Left colon (tissue), 2 donors: ENCODE measurements at regions of chrX and their contacts with region 1.

Region 1: GRCh38 chrX:24395775-24396174 is 35.3 kb downstream of the SUPT20HL1 start:
- DNase-seq: no peak
- ATAC-seq: peak; percentile 86

Region 2: GRCh38 chrX:24498975-24499374 is 103.2 kb after region 1 on chrX:
- intact Hi-C with region 1: loop called (anchors 10 kb)
- DNase-seq: no peak
- ATAC-seq: peak; percentile 41

Region 3: DNA sequence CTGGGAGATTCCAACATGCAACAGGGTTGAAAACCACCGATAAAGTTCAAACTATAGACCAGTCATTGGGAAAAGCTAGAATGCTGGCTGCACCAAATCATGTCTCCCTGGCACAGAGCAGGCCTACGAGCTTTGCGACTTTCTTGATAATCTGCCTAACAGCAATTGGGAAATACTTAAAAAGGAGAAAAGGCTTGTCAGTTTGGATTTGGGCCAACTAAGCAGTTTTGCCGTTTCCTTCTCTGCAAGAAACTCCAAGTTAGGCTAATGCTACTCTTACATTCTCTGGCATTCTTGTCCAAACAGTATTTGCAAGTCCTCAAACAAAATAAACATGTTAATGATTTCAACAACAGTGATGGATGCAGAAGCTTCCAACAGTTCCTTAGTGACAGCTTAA is 157.2 kb after region 1 on chrX:
- intact Hi-C with region 1: loop called in 1 of 2 experiments (anchors 10 kb)
- DNase-seq: no peak
- ATAC-seq: no peak